SK-N-SH (cell line): ENCODE measurements at regions of chr3 and their contacts with region 1.

Region 1: GRCh38 chr3:27712136-27713077 is 9.7 kb downstream of the EOMES start:
- DNase-seq: peak; percentile 86
- H3K4me3 ChIP-seq: peak overlapping the region; percentile 51 to 66
- H3K27ac ChIP-seq: no peak overlapping the region
- H3K4me1 ChIP-seq: peaks cover 0 to 24% of the 10 kb centered on the region in 2 experiments; a peak in 2 of 4 replicates
- H3K27me3 ChIP-seq: peaks cover 82% of the 10 kb centered on the region
- CTCF ChIP-seq: peak; percentile 81
- EP300 ChIP-seq: no peak
- RAD21 ChIP-seq: peak; percentile 84

Region 2: DNA sequence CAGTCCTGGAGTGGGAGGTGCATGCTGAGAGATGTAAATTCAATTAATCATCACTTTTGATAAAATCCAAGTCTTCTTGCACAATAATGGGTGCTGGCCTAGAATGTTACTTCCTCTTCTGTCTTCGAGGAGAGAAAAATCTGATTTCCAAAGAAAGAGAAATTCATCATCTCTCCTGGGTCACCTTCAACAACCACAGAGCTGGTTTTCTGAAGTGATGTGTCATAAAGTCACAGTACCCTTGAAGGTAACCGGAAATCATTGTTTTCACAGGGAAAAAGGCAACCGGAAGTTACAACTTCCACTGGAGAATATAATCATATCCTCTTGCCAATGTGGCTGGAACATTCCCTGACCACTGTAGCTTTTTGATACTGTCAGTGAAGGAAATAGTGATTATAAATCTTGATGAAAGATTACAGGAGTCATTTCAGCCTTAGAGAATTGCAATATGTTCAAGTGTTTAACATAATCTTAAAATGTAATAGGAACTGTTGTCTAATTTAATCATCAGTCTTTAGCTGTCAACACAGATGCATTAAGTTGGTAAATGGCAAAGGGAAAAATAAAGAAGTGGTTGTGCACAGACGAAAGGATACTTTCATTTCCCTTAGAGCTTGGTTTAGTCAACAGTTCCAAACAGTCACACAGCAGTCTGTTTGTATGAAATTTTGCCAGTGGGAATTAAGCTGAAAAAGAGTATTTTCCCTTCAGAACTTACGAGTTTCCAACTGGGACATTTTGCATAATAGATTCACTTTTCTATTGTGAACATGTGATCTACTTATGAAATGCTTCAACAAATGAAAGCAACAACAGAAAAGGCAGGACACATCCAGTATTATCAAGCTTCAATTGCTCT is 121.7 kb before region 1 on chr3:
- CTCF ChIA-PET with region 1: no interaction called
- POLR2A ChIA-PET with region 1: no interaction called
- DNase-seq: no peak
- H3K4me3 ChIP-seq: no peak overlapping the region
- H3K27ac ChIP-seq: peak overlapping the region in 1 of 2 experiments; percentile 64; a peak in 2 of 4 replicates
- H3K4me1 ChIP-seq: peaks cover 0 to 26% of the 10 kb centered on the region in 2 experiments; a peak in 2 of 4 replicates
- H3K27me3 ChIP-seq: no peaks in the 10 kb centered on the region
- CTCF ChIP-seq: no peak
- EP300 ChIP-seq: peak in 1 of 2 experiments; percentile 17; a peak in 1 of 4 replicates
- RAD21 ChIP-seq: no peak

Region 3: GRCh38 chr3:27699067-27699466 is 13.3 kb before region 1 on chr3:
- CTCF ChIA-PET with region 1: interaction called, 31 read pairs
- POLR2A ChIA-PET with region 1: no interaction called
- DNase-seq: no peak
- H3K4me3 ChIP-seq: no peak overlapping the region
- H3K27ac ChIP-seq: no peak overlapping the region
- H3K4me1 ChIP-seq: no peaks in the 10 kb centered on the region
- H3K27me3 ChIP-seq: no peaks in the 10 kb centered on the region
- CTCF ChIP-seq: no peak
- EP300 ChIP-seq: no peak
- RAD21 ChIP-seq: no peak

Region 4: GRCh38 chr3:28286595-28286994 is 574.2 kb after region 1 on chr3:
- CTCF ChIA-PET with region 1: interaction called, 30 read pairs
- POLR2A ChIA-PET with region 1: no interaction called
- DNase-seq: peak; percentile 26
- H3K4me3 ChIP-seq: no peak overlapping the region
- H3K27ac ChIP-seq: no peak overlapping the region
- H3K4me1 ChIP-seq: no peaks in the 10 kb centered on the region; a peak in 1 of 4 replicates
- H3K27me3 ChIP-seq: no peaks in the 10 kb centered on the region
- CTCF ChIP-seq: peak; percentile 65
- EP300 ChIP-seq: no peak
- RAD21 ChIP-seq: peak; percentile 72

Region 5: DNA sequence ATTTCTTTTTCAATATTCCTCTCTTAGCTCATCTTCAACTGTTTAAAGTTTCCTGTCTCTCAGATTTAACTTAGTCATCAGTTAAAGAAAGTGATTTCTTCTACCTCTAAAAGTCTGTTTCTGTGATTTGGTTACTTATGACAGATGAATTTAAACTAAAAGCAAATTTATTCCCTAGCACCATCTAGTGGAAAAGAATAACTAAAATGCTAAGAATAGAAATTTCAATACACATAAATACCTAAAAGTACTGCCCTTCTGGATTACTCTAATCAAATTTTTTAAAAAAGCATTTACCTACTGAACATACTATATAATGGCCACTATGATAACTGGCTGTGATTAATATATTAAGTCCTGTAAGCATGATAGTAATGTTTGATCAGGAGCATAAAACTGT is 622.1 kb after region 1 on chr3:
- CTCF ChIA-PET with region 1: interaction called, 72 read pairs
- POLR2A ChIA-PET with region 1: no interaction called
- DNase-seq: no peak
- H3K4me3 ChIP-seq: no peak overlapping the region
- H3K27ac ChIP-seq: no peak overlapping the region
- H3K4me1 ChIP-seq: no peaks in the 10 kb centered on the region
- H3K27me3 ChIP-seq: no peaks in the 10 kb centered on the region
- CTCF ChIP-seq: peak; percentile 59
- EP300 ChIP-seq: no peak
- RAD21 ChIP-seq: peak; percentile 6; the same call in 1 of the 2 replicates